ENCODE measurements at regions of chr13 and their contacts with region 1.

Region 1: DNA sequence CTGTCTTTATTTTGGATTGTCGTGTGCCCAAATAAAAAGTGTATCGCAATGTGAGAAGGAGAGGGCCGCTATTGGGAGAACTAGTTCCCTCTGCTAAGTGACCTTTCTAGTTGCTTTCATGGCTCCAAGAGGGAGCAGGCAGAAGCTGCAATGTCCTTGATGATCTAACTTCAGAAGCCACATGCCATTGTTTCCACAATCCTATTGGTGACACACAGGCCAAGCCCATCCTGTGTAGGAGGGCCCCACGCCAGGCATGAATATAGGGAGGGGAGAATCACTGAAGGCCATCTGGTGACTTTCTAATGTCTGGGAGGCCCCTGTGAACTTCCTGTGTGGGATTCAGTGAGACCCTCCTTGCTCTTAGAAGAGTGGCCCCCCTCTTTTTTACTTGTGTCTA is 47.8 kb upstream of the KPNA3 start:
- DNase-seq: no peak
- H3K4me3 ChIP-seq: no peak overlapping the region
- H3K27ac ChIP-seq: no peak overlapping the region
- H3K4me1 ChIP-seq: no peaks in the 10 kb centered on the region
- H3K27me3 ChIP-seq: no peaks in the 10 kb centered on the region
- CTCF ChIP-seq: no peak
- EP300 ChIP-seq: no peak
- POLR2A ChIP-seq: no peak

Region 2: GRCh38 chr13:49652355-49653305 is 187.6 kb before region 1 on chr13:
- intact Hi-C with region 1: loop called (anchors 5 kb)
- DNase-seq: no peak
- H3K4me3 ChIP-seq: no peak overlapping the region
- H3K27ac ChIP-seq: no peak overlapping the region
- H3K4me1 ChIP-seq: peaks cover 0 to 35% (median 26%) of the 10 kb centered on the region in 4 donors
- H3K27me3 ChIP-seq: no peaks in the 10 kb centered on the region
- CTCF ChIP-seq: peak; percentile 23 to 53 (median 29)
- EP300 ChIP-seq: no peak
- POLR2A ChIP-seq: no peak

Region 3: GRCh38 chr13:49669735-49670309 is 170.4 kb before region 1 on chr13:
- intact Hi-C with region 1: loop called (anchors 5 kb)
- DNase-seq: no peak
- H3K4me3 ChIP-seq: no peak overlapping the region
- H3K27ac ChIP-seq: no peak overlapping the region
- H3K4me1 ChIP-seq: peaks cover 0 to 13% (median 0%) of the 10 kb centered on the region in 4 donors
- H3K27me3 ChIP-seq: no peaks in the 10 kb centered on the region
- CTCF ChIP-seq: peak; percentile 67 to 78 (median 69)
- EP300 ChIP-seq: no peak
- POLR2A ChIP-seq: no peak

Region 4: DNA sequence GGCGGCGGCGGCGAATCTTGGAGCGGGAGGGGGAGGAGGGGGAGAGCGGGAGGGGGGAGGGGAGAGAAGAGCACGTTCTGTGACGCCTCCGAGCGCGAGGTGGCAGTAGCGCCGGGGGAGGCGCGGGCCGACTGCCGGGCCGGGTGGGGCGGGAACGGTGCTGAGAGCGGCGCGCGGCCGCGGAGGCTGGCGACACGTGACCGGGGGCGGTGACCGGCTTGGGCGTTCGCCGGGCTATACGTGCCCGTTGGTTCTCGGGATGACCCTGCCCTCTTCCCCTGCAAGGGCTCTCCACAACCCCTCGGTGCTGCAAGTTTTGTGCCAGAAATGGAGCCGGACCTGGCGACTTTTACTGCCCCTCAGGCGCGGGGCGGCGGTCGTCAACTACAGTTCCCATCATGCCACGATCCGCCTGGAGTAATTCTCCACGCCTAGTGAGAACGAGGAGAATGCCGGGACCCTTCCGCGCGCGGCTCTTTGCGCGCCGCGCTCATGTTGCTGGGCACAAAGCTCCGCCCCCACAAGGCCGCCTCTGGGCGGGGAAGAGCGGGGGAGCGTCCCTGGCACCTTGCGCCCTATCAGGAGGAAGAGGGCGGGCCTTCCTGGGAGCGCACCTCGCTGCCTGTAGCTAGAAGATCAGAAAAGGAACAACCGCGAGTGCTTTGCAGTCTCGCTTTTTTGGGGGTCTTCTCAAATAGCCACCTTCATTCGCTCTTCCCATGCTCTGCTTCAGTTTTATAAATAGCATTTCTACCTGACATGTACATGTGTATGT is 47.5 kb before region 1 on chr13 and contains the start of gene KPNA3:
- intact Hi-C with region 1: loop called (anchors 5 kb)
- DNase-seq: peak; percentile 98
- H3K4me3 ChIP-seq: peak within 1 kb of the TSS; percentile 95 to 99 (median 96)
- H3K27ac ChIP-seq: peak within 1 kb of the TSS; percentile 96 to 99 (median 98)
- H3K4me1 ChIP-seq: peaks cover 26 to 43% (median 40%) of the 10 kb centered on the region in 4 donors
- H3K27me3 ChIP-seq: no peaks in the 10 kb centered on the region
- CTCF ChIP-seq: peak in 1 of 3 experiments; percentile 13
- EP300 ChIP-seq: no peak
- POLR2A ChIP-seq: peak; percentile 33
- total RNA-seq, gene KPNA3: 47.9 to 66.4 (median 55.4) TPM

Region 5: DNA sequence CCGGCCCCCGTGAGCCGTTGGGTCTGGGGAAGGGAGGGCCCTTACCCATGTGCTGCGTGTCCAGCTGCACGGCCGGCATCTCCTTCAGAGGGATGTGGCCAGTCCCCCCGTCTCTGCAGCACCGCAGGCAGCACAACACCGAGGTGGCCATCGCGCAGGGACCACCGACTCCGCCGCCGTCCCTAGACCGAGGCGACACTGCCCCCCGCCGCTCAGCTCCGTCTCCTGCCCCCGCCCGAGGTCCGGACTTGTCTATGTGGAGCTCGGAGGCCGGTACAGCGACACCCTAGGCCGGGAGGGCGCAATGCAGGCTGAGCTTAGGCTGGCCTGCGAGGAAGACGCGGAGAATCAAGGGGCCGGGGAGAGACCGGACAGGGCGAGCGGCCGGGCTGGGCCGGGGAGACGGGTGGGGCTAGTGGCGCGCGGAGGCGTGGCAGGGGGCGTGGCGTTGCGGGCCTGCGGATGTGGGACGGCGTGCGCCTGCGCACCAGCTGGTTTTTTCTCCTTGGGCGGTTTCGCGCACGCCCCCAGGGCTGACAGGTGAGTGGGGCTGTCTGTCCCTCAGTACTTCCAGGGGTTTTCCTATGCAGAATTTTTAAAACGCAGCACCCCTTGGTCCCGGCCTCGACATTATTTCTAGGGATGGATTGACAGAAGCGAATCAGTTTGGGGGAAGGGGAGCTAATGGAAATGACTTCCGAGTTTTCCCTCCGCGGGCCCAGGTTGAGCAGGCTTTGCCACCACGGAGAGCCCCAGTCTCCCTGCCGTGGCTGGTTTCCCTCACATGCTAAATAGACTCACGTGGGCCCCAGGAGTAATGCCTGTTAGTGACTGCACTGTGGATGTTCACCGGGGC is 96.0 kb after region 1 on chr13 and contains the start of gene SPRYD7:
- intact Hi-C with region 1: loop called (anchors 5 kb)
- DNase-seq: peak; percentile 99
- H3K4me3 ChIP-seq: peak within 1 kb of the TSS; percentile 90 to 97 (median 94)
- H3K27ac ChIP-seq: peak within 1 kb of the TSS; percentile 90 to 94 (median 92)
- H3K4me1 ChIP-seq: peaks cover 21 to 76% (median 71%) of the 10 kb centered on the region in 4 donors
- H3K27me3 ChIP-seq: no peaks in the 10 kb centered on the region
- CTCF ChIP-seq: peak; percentile 89 to 98 (median 95)
- EP300 ChIP-seq: no peak
- POLR2A ChIP-seq: peak; percentile 65
- total RNA-seq, gene SPRYD7: 10.9 to 18.8 (median 15.0) TPM

Region 6: GRCh38 chr13:51050021-51050830 is 1210.0 kb after region 1 on chr13:
- intact Hi-C with region 1: no loop called
- DNase-seq: peak; percentile 57
- H3K4me3 ChIP-seq: no peak overlapping the region
- H3K27ac ChIP-seq: no peak overlapping the region
- H3K4me1 ChIP-seq: no peaks in the 10 kb centered on the region
- H3K27me3 ChIP-seq: no peaks in the 10 kb centered on the region
- CTCF ChIP-seq: no peak
- EP300 ChIP-seq: no peak
- POLR2A ChIP-seq: no peak